ENCODE measurements at regions of chr19 and their contacts with region 1.

Region 1: GRCh38 chr19:55279770-55280643 is at the start of gene HSPBP1:
- DNase-seq: peak; percentile 95
- H3K4me3 ChIP-seq: peak within 1 kb of the TSS; percentile 52 to 74
- H3K27ac ChIP-seq: peak within 1 kb of the TSS; percentile 77 to 85
- H3K4me1 ChIP-seq: peaks cover 0 to 5% of the 10 kb centered on the region in 2 donors
- H3K27me3 ChIP-seq: no peaks in the 10 kb centered on the region
- CTCF ChIP-seq: no peak
- POLR2A ChIP-seq: peak in 1 of 2 donors; percentile 25
- total RNA-seq, gene HSPBP1: 1.3 to 37.4 (median 25.6) TPM

Region 2: GRCh38 chr19:55216461-55217198 is 63.4 kb before region 1 on chr19:
- intact Hi-C with region 1: no loop called
- DNase-seq: peak; percentile 41 to 47
- H3K4me3 ChIP-seq: no peak overlapping the region
- H3K27ac ChIP-seq: no peak overlapping the region
- H3K4me1 ChIP-seq: no peaks in the 10 kb centered on the region
- H3K27me3 ChIP-seq: no peaks in the 10 kb centered on the region
- CTCF ChIP-seq: no peak
- POLR2A ChIP-seq: peak in 1 of 2 donors; percentile 26

Region 3: DNA sequence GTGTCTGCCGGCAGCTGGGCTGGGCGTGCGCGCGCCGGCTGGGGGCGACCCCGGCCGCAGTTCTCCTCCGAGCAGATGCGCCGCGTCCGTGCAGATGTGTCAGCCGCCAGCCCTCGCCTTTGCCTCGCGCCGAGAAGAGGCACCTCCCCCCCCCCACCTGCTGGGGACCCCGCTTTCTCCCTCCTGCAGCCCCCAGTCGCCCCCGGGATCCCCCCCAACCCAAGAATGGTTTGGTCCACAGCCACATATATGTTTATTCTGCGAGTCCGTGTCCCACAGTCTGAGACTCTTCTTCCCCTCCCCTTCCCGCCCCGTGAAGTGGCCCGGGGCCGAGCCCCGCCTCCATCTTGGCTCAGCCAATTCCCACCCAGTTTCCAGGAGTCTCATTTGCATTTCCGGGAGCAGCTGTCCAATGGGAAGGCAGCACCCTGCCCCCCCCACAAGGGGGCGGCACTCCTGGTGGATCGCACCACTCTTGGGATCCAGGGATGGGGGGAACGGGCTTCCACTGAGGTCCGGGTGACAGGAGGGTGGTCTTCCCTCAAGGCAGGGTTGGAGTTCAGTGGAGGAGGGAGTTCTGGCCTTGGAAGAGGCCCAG is 172.8 kb after region 1 on chr19:
- intact Hi-C with region 1: loop called (anchors 10 kb)
- DNase-seq: peak; percentile 72 to 81
- H3K4me3 ChIP-seq: no peak overlapping the region
- H3K27ac ChIP-seq: no peak overlapping the region
- H3K4me1 ChIP-seq: peaks cover 0 to 18% of the 10 kb centered on the region in 2 donors
- H3K27me3 ChIP-seq: peaks cover 18 to 24% of the 10 kb centered on the region in 2 donors
- CTCF ChIP-seq: peak in 1 of 4 experiments; percentile 3
- POLR2A ChIP-seq: no peak